Activated CD4-positive, alpha-beta memory T cell treated with anti-CD3 and anti-CD28 coated beads for 36 hours (primary cell): ENCODE measurements at regions of chr10 and their contacts with region 1.

Region 1: DNA sequence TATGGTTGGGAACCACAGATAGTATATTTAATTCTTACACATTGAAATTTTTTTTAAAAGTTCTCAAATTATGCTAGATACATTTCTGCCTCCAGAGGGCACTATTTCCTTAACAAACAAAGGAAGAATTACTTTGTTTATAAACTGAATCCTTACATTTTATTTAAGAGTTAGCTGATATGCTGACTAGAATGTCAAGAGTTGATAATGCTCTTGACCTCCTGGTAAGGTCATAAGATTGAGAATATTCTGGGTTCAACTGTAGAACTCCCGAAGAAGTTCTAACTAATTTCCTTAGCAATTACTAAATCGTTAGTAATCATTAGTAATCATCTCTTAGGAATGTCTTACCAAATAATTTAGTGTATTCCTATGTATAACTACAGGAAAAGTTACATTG is 95.3 kb upstream of the CYP26C1 start:
- DNase-seq: no peak
- H3K4me3 Mint-ChIP-seq: no peak overlapping the region
- H3K27ac Mint-ChIP-seq: no peak overlapping the region
- H3K4me1 Mint-ChIP-seq: no peaks in the 10 kb centered on the region
- H3K27me3 Mint-ChIP-seq: no peaks in the 10 kb centered on the region

Region 2: GRCh38 chr10:92231196-92231595 is 734.1 kb before region 1 on chr10:
- CTCF ChIA-PET with region 1: no interaction called
- POLR2A ChIA-PET with region 1: no interaction called
- intact Hi-C with region 1: no loop called
- DNase-seq: no peak
- H3K4me3 Mint-ChIP-seq: no peak overlapping the region
- H3K27ac Mint-ChIP-seq: no peak overlapping the region
- H3K4me1 Mint-ChIP-seq: peaks cover 4% of the 10 kb centered on the region
- H3K27me3 Mint-ChIP-seq: no peaks in the 10 kb centered on the region

Region 3: DNA sequence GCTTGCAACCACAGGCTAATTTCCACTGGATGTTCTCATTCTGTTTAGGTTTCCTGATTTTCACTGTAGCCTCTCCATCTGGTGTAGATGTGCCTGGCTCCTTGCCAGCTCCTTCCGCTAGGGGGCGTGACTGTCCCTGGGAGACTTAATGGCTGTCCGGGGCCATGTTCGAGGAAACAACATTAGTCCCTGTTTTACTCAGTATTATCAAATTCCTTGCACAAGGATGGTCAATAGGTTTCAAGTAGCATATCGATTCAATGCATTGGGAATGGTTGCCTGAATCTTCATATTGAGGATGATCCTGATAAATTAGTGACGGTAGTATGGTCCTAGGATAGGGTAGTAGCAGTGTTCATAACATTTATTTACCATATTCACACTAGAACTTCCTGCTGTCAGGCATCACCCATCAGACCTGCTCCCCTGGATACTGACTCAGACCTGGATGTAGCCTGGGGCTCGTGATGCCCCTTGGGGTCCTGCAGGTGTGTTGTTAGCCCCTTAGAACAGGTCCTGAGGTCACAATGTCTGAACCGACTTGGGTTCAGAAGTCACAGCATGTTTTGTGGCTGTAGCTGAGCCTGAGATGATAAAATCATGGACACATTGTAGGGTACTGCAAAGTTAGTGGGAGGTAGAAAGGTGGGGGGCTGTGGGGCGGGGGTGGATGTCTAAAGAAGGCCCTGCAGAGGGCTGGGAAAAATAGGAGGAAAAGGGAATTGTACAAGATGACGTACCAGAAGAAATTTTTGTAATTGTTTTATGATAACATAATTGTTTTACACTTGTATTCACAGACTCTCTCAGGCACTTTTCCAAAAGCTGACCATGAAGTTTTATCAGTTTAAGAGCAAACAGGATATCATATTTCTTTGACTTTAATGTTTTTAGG is 125.9 kb before region 1 on chr10:
- CTCF ChIA-PET with region 1: no interaction called
- POLR2A ChIA-PET with region 1: no interaction called
- intact Hi-C with region 1: no loop called
- DNase-seq: peak; percentile 75
- H3K4me3 Mint-ChIP-seq: no peak overlapping the region
- H3K27ac Mint-ChIP-seq: no peak overlapping the region
- H3K4me1 Mint-ChIP-seq: peaks cover 4% of the 10 kb centered on the region
- H3K27me3 Mint-ChIP-seq: no peaks in the 10 kb centered on the region

Region 4: GRCh38 chr10:93006435-93007039 is 41.2 kb after region 1 on chr10:
- CTCF ChIA-PET with region 1: interaction called, 12 read pairs
- POLR2A ChIA-PET with region 1: no interaction called
- intact Hi-C with region 1: no loop called
- DNase-seq: no peak
- H3K4me3 Mint-ChIP-seq: no peak overlapping the region
- H3K27ac Mint-ChIP-seq: no peak overlapping the region
- H3K4me1 Mint-ChIP-seq: no peaks in the 10 kb centered on the region
- H3K27me3 Mint-ChIP-seq: no peaks in the 10 kb centered on the region

Region 5: DNA sequence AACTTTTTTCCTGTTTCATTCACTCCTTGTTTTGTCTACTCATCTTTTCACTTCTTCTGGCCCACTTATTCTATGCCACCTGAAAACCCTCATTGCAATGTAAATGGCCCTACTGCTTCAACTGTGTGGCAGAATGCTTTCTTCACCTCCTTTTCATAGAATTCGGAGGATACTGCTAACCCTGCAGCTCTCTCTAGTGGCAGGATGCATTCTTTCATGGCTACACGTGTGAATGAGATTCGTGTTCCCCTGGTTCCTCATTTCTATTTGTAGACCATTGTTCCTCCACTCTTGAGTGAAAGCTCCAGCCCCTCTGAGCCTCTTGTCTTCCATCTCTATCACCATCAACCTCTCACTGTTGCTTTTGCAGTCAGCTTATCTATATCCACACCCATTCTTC is 74.4 kb after region 1 on chr10:
- CTCF ChIA-PET with region 1: interaction called, 3 read pairs
- POLR2A ChIA-PET with region 1: no interaction called
- intact Hi-C with region 1: loop called (anchors 2 kb)
- DNase-seq: no peak
- H3K4me3 Mint-ChIP-seq: no peak overlapping the region
- H3K27ac Mint-ChIP-seq: no peak overlapping the region
- H3K4me1 Mint-ChIP-seq: no peaks in the 10 kb centered on the region
- H3K27me3 Mint-ChIP-seq: no peaks in the 10 kb centered on the region

Region 6: DNA sequence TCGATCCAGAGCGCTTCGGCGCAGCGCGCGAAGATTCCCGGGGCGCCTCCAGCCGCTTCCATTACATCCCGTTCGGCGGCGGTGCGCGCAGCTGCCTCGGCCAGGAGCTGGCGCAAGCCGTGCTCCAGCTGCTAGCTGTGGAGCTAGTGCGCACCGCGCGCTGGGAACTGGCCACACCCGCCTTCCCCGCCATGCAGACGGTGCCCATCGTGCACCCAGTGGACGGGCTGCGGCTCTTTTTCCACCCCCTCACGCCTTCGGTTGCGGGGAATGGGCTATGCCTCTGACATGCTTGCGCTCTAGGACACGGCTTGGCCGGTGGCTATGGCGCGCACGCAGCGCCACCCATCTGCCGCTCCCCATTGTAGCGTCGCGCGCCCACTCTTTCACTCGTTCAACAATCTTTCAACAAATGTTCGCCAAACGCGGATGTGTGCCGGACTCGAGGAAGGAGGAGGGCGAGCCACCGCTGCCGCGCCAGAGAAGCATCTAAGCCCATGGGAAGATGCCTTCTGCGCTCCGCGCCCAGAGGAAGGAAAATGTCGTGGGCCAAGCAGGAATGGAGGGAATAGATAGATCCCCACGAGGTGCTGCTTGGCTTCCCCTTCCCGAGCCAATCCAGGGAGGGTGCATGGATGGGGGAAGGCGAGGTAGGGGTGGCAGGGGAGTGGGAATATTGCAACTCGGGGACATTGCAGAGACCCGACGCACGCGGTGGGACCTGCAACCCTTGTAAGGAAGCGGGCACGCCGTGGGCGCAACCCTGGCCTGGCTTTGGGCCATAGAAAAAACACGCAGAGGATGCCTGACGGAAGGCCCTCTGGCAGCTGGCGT is 103.3 kb after region 1 on chr10:
- CTCF ChIA-PET with region 1: interaction called, 11 read pairs
- POLR2A ChIA-PET with region 1: no interaction called
- intact Hi-C with region 1: loop called (anchors 2 kb)
- DNase-seq: no peak
- H3K4me3 Mint-ChIP-seq: no peak overlapping the region
- H3K27ac Mint-ChIP-seq: no peak overlapping the region
- H3K4me1 Mint-ChIP-seq: peaks cover 23% of the 10 kb centered on the region
- H3K27me3 Mint-ChIP-seq: peaks cover 82% of the 10 kb centered on the region

Region 7: DNA sequence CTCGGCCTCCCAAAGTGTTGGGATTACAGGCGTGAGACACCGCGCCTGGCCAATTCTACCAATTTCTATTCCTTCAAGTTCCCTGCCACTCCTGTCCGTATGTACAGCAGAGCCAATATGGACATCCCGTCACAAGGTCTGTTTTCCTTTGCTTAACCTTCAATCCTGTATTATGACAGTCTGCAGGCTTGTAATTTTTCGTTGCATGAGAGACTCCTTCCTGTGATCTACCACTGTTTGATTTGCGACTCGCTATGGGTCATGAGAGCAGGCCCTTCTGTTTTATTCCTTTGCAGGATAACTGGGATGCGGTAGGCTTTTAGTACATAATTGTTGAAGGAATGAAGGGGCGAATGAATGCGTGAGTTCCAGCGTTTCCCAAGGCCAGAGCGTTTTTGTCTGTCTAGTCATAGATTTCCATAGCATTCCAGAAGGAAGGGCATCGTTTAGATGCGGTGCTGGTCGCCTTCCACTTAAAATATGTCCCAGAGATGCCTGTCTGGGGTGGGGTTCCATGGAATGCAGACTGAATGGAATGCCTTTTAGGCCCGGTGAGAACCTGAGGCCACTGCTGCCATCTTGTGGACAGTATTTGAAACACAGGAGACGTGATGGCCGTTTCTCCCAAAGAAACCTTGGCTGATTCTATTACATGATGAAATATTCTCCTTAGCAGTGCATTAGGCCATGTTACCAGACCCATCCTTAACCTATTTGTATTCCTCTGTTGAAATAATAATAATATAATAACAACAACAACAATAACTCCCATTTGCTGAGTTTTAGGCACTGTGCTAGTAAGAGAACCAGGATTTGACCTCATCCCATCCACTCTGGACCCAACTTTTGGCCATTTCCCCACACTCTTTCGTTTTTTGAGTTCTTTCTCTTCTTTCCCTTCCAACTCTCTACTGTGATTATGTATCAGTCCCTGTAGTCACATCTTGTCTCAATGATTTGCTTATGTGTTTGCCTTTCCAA is 323.6 kb after region 1 on chr10:
- CTCF ChIA-PET with region 1: no interaction called
- POLR2A ChIA-PET with region 1: no interaction called
- intact Hi-C with region 1: loop called (anchors 10 kb)
- DNase-seq: peak; percentile 61
- H3K4me3 Mint-ChIP-seq: no peak overlapping the region
- H3K27ac Mint-ChIP-seq: no peak overlapping the region
- H3K4me1 Mint-ChIP-seq: no peaks in the 10 kb centered on the region
- H3K27me3 Mint-ChIP-seq: no peaks in the 10 kb centered on the region

Region 8: GRCh38 chr10:93352638-93353383 is 387.5 kb after region 1 on chr10:
- CTCF ChIA-PET with region 1: interaction called, 9 read pairs
- POLR2A ChIA-PET with region 1: no interaction called
- intact Hi-C with region 1: loop called (anchors 10 kb)
- DNase-seq: no peak
- H3K4me3 Mint-ChIP-seq: no peak overlapping the region
- H3K27ac Mint-ChIP-seq: no peak overlapping the region
- H3K4me1 Mint-ChIP-seq: peaks cover 3% of the 10 kb centered on the region
- H3K27me3 Mint-ChIP-seq: peaks cover 11% of the 10 kb centered on the region